ENCODE measurements at regions of chr7 and their contacts with region 1.

Region 1: DNA sequence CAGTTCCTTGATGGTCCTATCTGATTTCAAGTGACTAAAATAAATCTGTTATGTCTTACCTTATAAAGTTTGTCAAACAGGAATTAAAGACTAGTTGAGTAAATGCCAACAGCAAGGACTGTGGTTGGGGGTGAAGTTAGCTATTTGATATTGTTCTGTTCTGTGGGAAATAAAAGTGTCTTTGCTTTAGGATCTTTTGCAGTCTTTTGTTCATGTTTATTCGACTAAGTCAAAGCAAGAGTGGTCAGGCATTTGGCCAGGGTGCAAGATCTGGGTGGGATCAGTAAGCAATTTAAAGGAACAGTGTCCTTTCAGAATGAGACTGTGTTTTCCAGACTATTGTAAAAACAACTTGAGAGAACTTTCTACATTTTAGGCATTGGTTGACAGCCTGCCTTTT is at the start of gene COL28A1:
- DNase-seq: no peak
- H3K4me3 ChIP-seq: no peak within 1 kb of the TSS
- H3K27ac ChIP-seq: no peak within 1 kb of the TSS
- H3K4me1 ChIP-seq: no peaks in the 10 kb centered on the region
- H3K27me3 ChIP-seq: no peaks in the 10 kb centered on the region
- CTCF ChIP-seq: no peak

Region 2: DNA sequence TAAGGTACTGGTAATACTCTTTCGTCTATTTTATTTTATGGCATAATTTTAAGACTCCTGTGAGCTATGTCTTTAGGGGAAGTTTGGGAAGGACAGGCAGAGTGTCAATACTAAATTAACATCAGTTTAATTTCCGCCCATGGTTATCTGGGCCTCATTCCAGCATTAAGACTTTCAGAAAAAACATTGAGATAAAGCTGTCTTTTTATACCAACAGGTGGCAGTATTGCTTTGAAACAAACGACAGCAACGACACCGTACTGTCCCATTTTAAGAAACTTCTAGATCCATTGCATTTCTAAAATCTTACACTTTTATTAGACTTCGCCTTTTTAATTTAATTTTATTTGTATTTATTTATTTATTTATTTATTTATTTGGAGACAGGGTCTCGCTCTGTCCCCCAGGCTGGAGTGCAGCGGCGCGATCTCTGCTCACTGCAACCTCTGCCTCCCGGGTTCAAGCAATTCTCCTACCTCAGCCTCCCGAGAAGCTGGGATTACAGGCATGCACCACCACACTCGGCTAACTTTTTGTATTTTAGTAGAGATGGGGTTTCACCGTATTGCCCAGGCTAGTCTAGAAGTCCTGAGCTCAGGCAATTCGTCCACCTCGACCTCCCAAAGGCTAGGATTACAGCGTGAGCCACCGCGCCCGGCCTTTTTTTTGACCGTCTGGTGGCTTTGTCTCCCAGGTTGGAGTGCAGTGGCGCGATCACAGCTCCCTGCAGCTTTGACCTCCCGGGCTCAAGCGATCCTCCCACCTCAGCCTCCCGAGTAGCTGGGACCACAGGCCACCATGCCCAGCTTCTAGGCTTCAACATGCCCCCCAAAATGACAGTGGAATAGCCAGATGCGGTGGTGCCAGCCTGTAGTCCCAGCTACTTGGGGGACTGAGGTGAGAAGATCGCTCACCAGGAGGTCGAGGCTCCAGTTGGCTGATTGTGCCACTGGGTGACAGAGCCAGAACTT is 432.1 kb before region 1 on chr7:
- intact Hi-C with region 1: loop called (anchors 5 kb)
- DNase-seq: no peak
- H3K4me3 ChIP-seq: peak overlapping the region in 1 of 2 donors; percentile 13
- H3K27ac ChIP-seq: no peak overlapping the region
- H3K4me1 ChIP-seq: peaks cover 0 to 13% (median 12%) of the 10 kb centered on the region in 4 donors
- H3K27me3 ChIP-seq: no peaks in the 10 kb centered on the region
- CTCF ChIP-seq: peak; percentile 63 to 69

Region 3: GRCh38 chr7:7585253-7585928 is 49.7 kb after region 1 on chr7:
- intact Hi-C with region 1: no loop called
- DNase-seq: no peak
- H3K4me3 ChIP-seq: no peak overlapping the region
- H3K27ac ChIP-seq: no peak overlapping the region
- H3K4me1 ChIP-seq: no peaks in the 10 kb centered on the region
- H3K27me3 ChIP-seq: no peaks in the 10 kb centered on the region
- CTCF ChIP-seq: no peak